ENCODE measurements at regions of chr19 and their contacts with region 1.

Region 1: GRCh38 chr19:4732680-4733114 is 9.1 kb upstream of the DPP9 start:
- ATAC-seq: peak; percentile 84 to 99 (median 91)
- H3K4me3 ChIP-seq: no peak overlapping the region
- H3K27ac ChIP-seq: no peak overlapping the region
- H3K4me1 ChIP-seq: peaks cover under 1 to 3% of the 10 kb centered on the region in 2 donors

Region 2: DNA sequence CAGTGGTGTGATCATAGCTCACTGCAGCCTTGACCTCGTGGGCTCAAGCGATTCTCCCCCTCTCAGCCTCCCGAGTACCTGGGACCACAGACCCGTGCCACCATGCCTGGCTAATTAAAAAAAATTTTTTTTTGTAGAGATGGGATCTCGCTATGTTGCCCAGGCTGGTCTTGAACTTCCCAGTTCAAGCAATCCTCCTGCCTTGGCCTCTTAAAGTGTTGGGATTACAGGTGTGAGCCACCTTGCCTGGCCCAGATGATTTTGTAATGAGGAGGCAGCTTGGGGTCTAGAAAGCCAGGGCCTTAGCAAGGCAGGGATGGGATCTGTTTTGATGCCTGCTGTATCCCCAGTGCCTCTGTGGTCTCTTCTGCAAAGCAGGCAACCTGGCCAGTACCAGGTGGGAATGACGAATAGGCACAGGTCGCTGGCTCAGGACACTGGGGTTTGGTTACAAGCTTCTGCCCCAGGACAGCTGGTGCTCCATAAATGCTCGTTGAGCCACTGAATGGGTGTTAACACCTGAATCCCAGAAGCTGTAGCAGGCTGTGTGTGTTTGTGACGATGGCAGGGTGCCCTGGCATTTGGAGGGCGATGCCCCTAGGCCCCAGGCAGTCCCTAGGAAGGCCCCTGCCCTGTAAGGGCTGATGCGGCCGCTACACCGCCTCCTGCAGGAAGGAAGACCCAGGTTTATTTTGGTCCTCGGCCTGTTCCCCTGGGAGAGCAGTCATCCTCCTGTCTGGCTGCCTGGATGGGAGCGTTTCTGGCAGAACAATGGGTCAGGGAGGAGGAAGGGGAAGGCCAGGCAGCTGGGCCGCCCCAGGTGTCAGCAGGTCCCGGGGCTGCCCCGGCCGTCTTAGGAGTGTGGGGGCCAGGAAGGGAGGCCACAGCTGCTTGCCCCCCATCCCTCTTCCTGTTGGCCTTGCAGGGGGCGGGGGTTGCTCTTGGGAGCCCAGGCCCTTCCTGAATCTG is 84.7 kb before region 1 on chr19:
- in situ Hi-C with region 1: no loop called
- ATAC-seq: peak in 3 of 8 experiments; percentile 7 to 11 (median 11)
- H3K4me3 ChIP-seq: no peak overlapping the region
- H3K27ac ChIP-seq: peak overlapping the region in 1 of 2 donors; percentile 37
- H3K4me1 ChIP-seq: peaks cover 0 to 5% of the 10 kb centered on the region in 2 donors

Region 3: GRCh38 chr19:4781801-4782200 is 49.1 kb after region 1 on chr19:
- in situ Hi-C with region 1: loop called in 5 of 9 experiments (anchors 10 kb)
- ATAC-seq: peak in 1 of 8 experiments; percentile 11
- H3K4me3 ChIP-seq: no peak overlapping the region
- H3K27ac ChIP-seq: no peak overlapping the region
- H3K4me1 ChIP-seq: peaks cover 3 to 4% of the 10 kb centered on the region in 2 donors

Region 4: DNA sequence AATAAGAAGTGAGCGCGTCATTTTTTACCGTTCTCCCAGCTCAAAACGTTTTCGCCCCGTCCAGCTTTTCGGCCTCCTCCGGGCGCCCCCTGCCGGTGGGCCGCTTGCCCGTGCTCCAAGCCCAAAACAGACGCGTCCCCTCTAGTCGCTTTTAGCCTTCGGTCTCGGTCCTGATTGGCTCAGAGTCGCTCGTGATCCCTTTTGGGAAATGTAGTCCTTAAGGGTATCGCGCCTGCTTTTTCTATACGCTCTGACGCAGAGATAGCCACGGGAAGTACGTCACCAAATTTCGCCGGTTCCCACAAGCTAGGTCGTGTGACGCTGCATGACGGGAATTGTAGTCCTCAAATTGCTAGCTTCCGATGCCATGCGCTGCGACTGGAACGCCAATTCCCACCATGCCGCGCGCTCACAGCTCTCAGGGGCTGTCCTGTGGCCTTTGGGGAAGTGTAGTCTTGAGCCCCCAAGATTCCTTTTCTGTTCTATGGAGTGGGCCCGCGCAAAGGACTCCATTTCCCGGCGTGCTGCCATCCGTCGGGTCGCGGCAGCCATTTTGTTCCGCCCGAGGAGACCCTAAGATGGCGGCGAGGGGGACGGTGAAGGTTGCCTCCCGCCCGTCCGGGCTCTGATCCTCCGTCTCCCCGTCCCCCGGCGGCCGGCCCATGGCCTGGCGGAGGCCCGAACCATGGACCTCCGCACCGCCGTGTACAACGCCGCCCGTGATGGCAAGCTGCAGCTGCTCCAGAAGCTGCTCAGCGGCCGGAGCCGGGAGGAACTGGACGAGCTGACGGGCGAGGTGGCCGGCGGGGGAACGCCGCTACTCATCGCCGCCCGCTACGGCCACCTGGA is 58.7 kb after region 1 on chr19 and contains the start of gene FEM1A:
- in situ Hi-C with region 1: loop called in 7 of 9 experiments (anchors 10 kb)
- ATAC-seq: peak; percentile 94 to 97 (median 96)
- H3K4me3 ChIP-seq: peak within 1 kb of the TSS; percentile 67 to 94 (median 77)
- H3K27ac ChIP-seq: peak within 1 kb of the TSS; percentile 86 to 98
- H3K4me1 ChIP-seq: peaks cover 6 to 8% of the 10 kb centered on the region in 2 donors
- total RNA-seq, gene FEM1A: 1.6 to 5.3 (median 2.9) TPM

Region 5: GRCh38 chr19:4803736-4804695 is 71.3 kb after region 1 on chr19:
- in situ Hi-C with region 1: loop called in 3 of 9 experiments (anchors 10 kb)
- ATAC-seq: peak; percentile 59 to 95 (median 78)
- H3K4me3 ChIP-seq: no peak overlapping the region
- H3K27ac ChIP-seq: no peak overlapping the region
- H3K4me1 ChIP-seq: no peaks in the 10 kb centered on the region